ENCODE measurements at regions of chr5 and their contacts with region 1.

Region 1: DNA sequence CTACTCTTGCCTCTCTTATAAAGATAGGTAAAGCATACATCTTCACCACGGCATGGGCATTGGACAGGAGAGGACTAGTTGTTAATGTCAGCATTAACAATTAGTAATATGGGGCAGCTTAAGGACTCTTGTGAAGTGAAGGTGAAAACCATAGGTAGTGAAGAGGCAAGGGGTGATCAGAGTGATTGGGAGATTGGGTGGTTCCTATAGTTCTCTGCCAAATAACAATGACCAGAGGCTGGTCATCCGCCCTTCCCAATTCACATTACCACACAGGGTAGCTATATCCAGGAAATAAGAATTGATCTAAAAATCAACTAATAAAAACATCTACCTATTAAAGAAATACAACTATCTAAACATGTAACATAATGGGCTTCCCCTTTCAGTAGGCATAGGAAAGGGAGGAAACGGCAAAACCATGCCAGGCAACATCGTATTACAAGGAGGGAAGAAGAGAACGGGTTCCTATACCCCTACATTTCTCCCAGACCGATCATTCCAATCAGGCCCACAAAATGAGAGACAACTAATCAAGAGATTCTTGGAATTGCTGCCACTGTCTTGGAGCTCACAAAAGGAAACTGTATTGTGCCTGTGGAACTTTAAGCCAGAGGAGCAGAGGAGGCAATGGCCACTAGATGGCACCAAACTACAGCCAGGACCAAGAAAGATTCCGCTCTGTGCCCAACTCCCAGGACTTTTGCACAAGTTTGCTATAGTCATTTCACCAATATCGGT is 121.6 kb downstream of the FBXL17 start:
- DNase-seq: peak; percentile 60
- H3K4me3 ChIP-seq: no peak overlapping the region
- H3K27ac ChIP-seq: no peak overlapping the region
- H3K27me3 ChIP-seq: no peaks in the 10 kb centered on the region
- CTCF ChIP-seq: peak; percentile 99

Region 2: GRCh38 chr5:108233617-108234155 is 26.6 kb before region 1 on chr5:
- CTCF ChIA-PET with region 1: interaction called, 25 read pairs
- POLR2A ChIA-PET with region 1: no interaction called
- DNase-seq: no peak
- H3K4me3 ChIP-seq: no peak overlapping the region
- H3K27ac ChIP-seq: no peak overlapping the region
- H3K27me3 ChIP-seq: no peaks in the 10 kb centered on the region
- CTCF ChIP-seq: no peak

Region 3: GRCh38 chr5:108295578-108296368 is 35.5 kb after region 1 on chr5:
- CTCF ChIA-PET with region 1: interaction called, 17 read pairs
- POLR2A ChIA-PET with region 1: no interaction called
- DNase-seq: no peak
- H3K4me3 ChIP-seq: no peak overlapping the region
- H3K27ac ChIP-seq: no peak overlapping the region
- H3K27me3 ChIP-seq: no peaks in the 10 kb centered on the region
- CTCF ChIP-seq: no peak

Region 4: GRCh38 chr5:108324886-108325285 is 64.6 kb after region 1 on chr5:
- CTCF ChIA-PET with region 1: interaction called, 55 read pairs
- POLR2A ChIA-PET with region 1: no interaction called
- DNase-seq: no peak
- H3K4me3 ChIP-seq: no peak overlapping the region
- H3K27ac ChIP-seq: no peak overlapping the region
- H3K27me3 ChIP-seq: no peaks in the 10 kb centered on the region
- CTCF ChIP-seq: no peak

Region 5: GRCh38 chr5:108353087-108353486 is 92.8 kb after region 1 on chr5:
- CTCF ChIA-PET with region 1: interaction called, 46 read pairs
- POLR2A ChIA-PET with region 1: interaction called, 3 read pairs
- DNase-seq: no peak
- H3K4me3 ChIP-seq: no peak overlapping the region
- H3K27ac ChIP-seq: no peak overlapping the region
- H3K27me3 ChIP-seq: no peaks in the 10 kb centered on the region
- CTCF ChIP-seq: no peak